ENCODE measurements at regions of chr2 and their contacts with region 1.

Region 1: DNA sequence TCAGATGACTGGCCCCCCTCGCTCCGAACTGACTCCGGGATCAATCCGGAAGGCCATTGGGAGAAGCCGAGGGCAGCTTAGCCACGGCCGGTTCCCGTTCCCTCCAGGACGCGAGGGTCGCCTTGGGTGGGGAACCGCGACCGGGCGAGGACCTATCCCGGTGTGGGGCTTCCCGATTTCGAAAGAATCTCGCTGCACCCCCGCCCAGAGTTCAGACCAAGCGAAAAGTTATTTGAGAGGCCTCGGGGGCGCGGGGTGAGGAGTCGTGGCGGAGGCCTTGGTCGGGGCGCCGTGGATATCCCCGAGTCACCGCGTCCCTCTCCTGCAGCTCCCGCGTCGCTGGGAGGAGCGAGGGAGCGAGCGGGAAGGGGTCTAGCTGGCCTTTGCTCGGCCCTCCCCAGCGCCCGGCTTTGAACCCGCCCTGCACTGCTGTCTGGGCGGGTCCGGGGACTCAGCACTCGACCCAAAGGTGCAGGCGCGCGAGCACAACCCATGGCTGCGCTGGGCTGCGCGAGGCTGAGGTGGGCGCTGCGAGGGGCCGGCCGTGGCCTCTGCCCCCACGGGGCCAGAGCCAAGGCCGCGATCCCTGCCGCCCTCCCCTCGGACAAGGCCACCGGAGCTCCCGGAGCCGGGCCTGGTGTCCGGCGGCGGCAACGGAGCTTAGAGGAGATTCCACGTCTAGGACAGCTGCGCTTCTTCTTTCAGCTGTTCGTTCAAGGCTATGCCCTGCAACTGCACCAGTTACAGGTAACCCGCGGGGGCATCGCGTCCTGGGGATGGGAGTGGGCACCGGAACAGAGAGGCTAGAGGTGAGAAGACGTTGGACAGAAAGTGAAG is at the start of gene CYP27A1:
- DNase-seq: peak; percentile 61 to 78
- ATAC-seq: peak; percentile 83 to 87 (median 85)
- H3K4me3 ChIP-seq: peak within 1 kb of the TSS; percentile 74
- H3K27ac ChIP-seq: peak within 1 kb of the TSS; percentile 78
- H3K4me1 ChIP-seq: peaks cover 26% of the 10 kb centered on the region
- H3K27me3 ChIP-seq: peaks cover 0 to 2% (median 0%) of the 10 kb centered on the region in 3 donors
- CTCF ChIP-seq: no peak
- total RNA-seq, gene CYP27A1: 23.4 to 48.4 (median 45.9) TPM

Region 2: GRCh38 chr2:218406209-218406948 is 375.5 kb before region 1 on chr2:
- intact Hi-C with region 1: no loop called
- DNase-seq: peak; percentile 98 to 99
- ATAC-seq: peak; percentile 86 to 89 (median 88)
- H3K4me3 ChIP-seq: peak overlapping the region; percentile 60
- H3K27ac ChIP-seq: peak overlapping the region; percentile 74
- H3K4me1 ChIP-seq: peaks cover 26% of the 10 kb centered on the region
- H3K27me3 ChIP-seq: no peaks in the 10 kb centered on the region
- CTCF ChIP-seq: peak; percentile 71

Region 3: DNA sequence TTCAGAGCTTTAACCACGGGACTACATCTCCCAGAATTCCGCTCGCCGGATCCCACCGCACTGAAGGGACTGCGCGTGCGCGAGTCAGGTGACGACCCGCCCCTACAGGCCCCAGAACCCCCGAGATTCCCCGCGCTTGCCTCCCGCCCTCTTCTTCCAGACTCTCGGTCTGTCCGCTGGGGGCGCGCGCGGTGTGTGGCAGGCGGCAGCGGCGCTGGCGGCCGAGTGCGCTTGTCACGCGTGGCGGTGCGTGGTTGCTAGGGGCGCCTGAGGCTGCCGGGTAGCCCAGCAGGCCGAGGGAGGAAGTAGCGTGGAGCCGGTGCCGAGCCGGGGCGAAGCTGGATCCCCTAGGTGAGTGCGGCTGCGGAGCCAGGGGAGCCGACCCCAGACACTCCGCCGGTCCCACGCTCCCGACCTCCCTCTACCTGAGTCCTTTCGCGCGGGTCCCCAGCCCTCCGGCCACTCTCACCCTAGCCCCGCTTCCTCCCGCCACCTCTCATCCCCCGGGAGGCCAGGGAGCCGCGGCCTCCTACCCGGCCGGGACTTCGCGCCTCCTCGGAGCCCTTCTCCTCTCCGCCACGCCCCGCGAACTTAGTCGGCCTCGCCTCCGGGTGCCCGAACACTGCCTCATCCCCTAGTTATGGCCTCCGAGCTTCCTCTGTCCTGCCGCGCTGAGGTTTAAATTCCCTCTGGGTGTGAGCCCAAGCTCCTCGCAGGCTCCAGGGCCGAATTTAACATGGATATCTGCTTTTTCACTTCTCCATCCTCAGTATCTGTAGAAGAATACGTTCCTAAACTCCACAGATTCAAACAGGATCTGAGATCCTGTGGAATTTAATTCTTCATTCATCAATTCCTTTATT is 71.0 kb before region 1 on chr2 and contains the start of gene TTLL4:
- intact Hi-C with region 1: loop called in 1 of 2 experiments (anchors 5 kb)
- DNase-seq: peak; percentile 99
- ATAC-seq: peak; percentile 99 to 100 (median 99)
- H3K4me3 ChIP-seq: peak within 1 kb of the TSS; percentile 91
- H3K27ac ChIP-seq: peak within 1 kb of the TSS; percentile 92
- H3K4me1 ChIP-seq: peaks cover 9% of the 10 kb centered on the region
- H3K27me3 ChIP-seq: no peaks in the 10 kb centered on the region
- CTCF ChIP-seq: peak; percentile 86
- total RNA-seq, gene TTLL4: 10.9 to 14.5 (median 13.8) TPM

Region 4: DNA sequence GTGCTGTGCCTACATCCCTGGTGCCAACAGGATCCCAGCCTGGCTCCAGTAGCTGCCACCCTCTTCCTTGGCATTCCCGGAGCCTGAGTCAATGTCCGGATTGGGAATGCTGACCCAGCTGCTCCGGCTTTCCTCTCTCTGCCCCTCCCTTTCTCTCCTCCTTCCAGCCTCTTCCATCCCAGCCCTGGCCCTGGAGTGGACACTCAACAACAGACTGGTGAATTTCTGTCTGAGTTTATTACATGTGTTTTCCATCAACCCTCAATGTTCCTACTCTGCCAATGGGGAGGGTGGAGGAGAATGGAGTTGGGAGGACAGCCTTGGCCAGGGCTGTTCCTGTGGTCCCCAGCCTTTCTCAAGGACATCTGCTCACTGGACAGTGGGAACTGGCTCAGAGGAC is 50.6 kb after region 1 on chr2:
- intact Hi-C with region 1: loop called in 1 of 2 experiments (anchors 5 kb)
- DNase-seq: peak; percentile 69 to 89
- ATAC-seq: peak; percentile 73 to 82 (median 76)
- H3K4me3 ChIP-seq: peak overlapping the region; percentile 69
- H3K27ac ChIP-seq: peak overlapping the region; percentile 91
- H3K4me1 ChIP-seq: peaks cover 70% of the 10 kb centered on the region
- H3K27me3 ChIP-seq: no peaks in the 10 kb centered on the region
- CTCF ChIP-seq: no peak

Measured in psoas muscle (tissue), 8 donors.